ENCODE measurements at regions of chr11 and their contacts with region 1.

Region 1: GRCh38 chr11:114262681-114263512 is 33.3 kb upstream of the NNMT start:
- DNase-seq: peak; percentile 76

Region 2: DNA sequence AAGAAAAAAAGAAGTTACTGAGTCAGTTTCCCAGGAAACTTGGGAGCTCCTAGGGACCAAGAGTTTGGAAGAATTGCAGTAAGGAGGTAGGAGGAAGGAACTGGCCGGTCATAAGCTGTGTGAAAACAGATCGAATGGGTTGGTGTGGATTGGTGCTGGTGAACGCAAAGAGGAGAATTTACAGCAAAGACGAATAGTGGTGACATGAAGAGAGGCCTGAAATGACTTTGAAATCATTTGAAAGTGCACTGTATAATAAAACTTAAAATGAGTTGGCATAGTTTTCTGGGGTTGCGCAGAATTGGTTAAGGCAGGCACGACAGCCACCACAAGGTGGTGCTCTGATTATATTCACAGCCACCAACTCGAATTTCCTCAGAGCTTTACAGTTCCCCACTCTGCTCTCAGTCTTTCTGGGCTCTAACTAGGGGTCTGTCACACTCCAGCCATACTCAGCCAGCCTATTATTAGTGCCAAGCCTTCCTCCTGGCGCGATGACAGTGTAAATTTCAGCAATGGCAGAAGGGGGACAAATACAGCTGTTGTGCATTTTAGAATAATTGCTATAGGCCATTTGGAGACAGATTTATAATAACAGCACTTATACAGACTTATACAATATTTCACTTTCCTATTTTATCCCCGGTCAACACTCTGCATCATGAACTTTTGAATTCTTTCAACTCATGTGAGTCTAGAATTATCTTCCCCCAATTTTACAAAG is 366.6 kb before region 1 on chr11:
- intact Hi-C with region 1: loop called (anchors 5 to 10 kb)
- DNase-seq: no peak

Region 3: DNA sequence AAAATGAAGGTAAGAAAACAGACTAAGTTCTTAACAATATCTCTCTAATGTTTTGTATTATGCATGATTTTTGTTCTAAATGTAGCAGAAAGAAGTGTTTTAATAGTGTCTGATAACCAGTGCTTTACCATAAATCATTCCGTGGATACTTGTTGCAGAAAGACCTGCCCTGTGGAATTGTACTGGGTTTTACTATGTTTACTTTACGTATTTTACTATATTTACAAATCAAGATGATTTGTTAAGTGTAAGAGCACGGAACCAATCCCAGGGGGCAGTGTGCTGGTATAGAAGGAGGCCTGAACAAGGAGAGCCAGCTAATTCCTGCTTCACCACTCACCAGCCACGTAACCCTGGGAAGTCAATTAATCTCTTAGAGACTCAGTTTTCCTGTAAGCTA is 356.9 kb before region 1 on chr11:
- intact Hi-C with region 1: loop called in 1 of 2 experiments (anchors 10 kb)
- DNase-seq: no peak

Region 4: GRCh38 chr11:113989381-113989780 is 273.5 kb before region 1 on chr11:
- intact Hi-C with region 1: loop called in 1 of 2 experiments (anchors 2 kb)
- DNase-seq: no peak

Region 5: GRCh38 chr11:114036156-114036811 is 226.6 kb before region 1 on chr11:
- intact Hi-C with region 1: loop called in 1 of 2 experiments (anchors 2 kb)
- DNase-seq: peak; percentile 93

Region 6: GRCh38 chr11:114233755-114234154 is 29.1 kb before region 1 on chr11:
- intact Hi-C with region 1: no loop called
- DNase-seq: no peak

Measured in posterior vena cava (tissue), 2 donors.